ENCODE measurements at regions of chr12 and their contacts with region 1.

Region 1: GRCh38 chr12:119902084-119902509 is 25.0 kb upstream of the CIT start:
- DNase-seq: peak; percentile 21 to 82
- H3K4me3 ChIP-seq: no peak overlapping the region
- H3K27ac ChIP-seq: no peak overlapping the region
- H3K4me1 ChIP-seq: no peaks in the 10 kb centered on the region
- H3K27me3 ChIP-seq: no peaks in the 10 kb centered on the region
- CTCF ChIP-seq: peak; percentile 40 to 87 (median 81)
- EP300 ChIP-seq: no peak
- POLR2A ChIP-seq: no peak
- RAD21 ChIP-seq: peak; percentile 79 to 85

Region 2: DNA sequence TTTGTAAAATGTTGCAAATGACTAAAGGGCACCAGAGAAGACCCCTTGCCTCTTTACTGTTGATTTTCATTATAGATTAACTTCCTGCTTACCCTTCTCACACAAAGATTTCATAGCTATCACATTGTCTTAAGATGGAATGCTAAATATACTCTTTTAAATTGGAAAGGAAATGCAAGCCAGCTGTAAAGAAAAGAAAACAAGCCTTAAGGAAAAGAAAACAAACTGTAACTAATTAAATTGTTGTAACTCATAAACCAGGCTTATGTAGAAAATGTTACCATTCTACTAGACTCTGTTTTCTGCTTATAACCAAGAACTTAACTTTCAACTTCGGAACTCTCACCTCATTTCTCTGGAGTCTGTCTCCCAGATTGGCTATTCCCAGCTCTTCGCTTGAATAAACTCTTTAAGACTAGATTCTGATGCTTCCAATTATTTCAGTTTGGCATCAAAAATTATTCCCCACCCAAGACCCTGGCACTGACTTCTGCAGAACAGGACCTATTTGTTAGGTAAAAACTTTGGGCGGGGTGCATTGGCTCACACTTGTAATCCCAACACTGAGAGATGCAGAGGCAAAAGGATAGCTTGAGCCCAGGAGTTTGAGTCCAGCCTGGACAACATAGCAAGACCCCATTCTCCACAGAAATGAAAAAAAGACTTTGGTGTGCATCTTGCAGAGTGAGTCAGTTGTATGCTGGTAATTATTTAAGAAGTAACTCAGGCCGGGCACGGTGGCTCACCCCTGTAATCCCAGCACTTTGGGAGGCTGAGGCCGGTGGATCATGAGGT is 11.6 kb after region 1 on chr12:
- CTCF ChIA-PET with region 1: interaction called, 22 read pairs
- POLR2A ChIA-PET with region 1: no interaction called
- DNase-seq: no peak
- H3K4me3 ChIP-seq: no peak overlapping the region
- H3K27ac ChIP-seq: no peak overlapping the region
- H3K4me1 ChIP-seq: no peaks in the 10 kb centered on the region
- H3K27me3 ChIP-seq: no peaks in the 10 kb centered on the region
- CTCF ChIP-seq: no peak
- EP300 ChIP-seq: no peak
- POLR2A ChIP-seq: no peak
- RAD21 ChIP-seq: no peak